Sciatic nerve (tissue), 2 donors: ENCODE measurements at regions of chrX and their contacts with region 1.

Region 1: DNA sequence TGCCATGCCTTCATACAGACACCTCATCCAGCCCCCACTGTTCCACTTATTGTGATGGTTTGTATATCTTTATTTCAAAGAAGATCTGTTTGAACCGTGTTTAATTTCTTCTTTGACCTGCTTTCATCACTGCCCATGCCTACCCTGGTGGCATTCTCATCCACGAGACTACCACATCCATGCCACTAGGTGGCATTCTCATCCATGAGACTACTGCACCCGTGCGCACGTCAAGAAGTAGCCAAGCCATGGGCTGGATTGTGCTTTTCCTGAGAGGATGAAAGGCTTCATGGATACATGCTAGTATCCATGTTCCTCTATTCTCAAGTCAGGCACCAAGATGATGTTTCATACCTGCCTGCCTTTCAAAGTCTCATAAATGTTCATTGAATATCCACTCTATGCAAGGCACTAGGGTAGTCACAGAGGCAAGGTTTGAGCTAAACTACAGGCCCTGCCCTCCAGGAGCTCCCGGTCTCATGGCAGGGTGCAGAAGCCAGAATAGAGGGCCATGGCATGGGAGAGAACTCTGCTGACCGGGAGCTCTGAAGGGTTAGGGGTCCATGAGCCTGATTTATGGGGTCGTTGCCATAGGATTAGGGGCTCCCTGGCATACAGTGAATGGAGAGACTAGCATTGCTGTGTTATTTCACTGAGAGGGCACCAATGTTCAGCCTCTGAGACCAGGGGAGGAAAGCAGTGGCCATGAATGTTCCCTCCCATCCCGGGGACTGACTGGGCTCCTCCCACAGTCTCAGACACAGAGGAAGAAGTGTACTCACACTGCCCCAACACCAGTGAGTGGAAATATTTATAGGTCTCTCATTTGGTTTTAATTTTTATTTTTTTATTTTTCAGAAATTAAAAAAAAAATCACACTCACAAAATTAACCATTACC is 24.8 kb upstream of the EOLA2 start:
- DNase-seq: peak; percentile 64
- ATAC-seq: peak; percentile 86

Region 2: DNA sequence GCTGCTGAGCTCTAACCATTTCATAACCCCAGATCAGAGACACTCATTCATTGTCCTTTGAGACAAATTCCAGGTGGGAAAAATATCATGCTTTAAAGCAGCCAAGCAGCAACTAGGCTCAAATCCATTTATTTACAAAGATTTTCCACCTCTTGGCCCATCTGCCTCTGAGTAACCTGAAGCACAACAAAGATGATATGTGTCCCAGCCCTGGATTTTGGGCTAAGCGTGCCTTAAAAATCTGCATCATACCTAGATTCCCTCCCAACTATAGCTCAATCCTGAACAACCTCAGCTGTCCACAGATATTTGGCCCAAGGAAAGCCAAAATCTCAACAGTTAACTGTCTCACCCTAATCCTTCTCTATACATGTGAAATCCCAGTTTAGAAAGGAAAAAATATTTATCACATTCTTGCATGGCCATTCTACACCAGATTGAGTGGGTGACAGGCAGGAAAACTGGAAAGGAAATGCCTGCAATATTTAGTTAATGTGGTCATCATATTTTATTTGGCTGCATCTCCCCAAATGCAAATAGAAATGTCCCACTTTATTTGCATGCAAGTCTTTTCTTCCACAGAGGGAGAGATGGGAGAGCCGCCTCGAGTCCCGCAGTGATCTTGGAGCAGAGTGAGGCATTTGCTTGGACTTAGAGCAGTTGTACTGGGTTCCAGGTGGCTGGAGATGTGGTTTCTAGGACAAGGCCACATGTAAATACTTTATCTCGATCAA is 121.6 kb after region 1 on chrX:
- intact Hi-C with region 1: no loop called
- DNase-seq: no peak
- ATAC-seq: no peak

Region 3: GRCh38 chrX:150508451-150509367 is 545.6 kb after region 1 on chrX:
- intact Hi-C with region 1: loop called (anchors 10 kb)
- DNase-seq: peak; percentile 73
- ATAC-seq: peak; percentile 80

Region 4: DNA sequence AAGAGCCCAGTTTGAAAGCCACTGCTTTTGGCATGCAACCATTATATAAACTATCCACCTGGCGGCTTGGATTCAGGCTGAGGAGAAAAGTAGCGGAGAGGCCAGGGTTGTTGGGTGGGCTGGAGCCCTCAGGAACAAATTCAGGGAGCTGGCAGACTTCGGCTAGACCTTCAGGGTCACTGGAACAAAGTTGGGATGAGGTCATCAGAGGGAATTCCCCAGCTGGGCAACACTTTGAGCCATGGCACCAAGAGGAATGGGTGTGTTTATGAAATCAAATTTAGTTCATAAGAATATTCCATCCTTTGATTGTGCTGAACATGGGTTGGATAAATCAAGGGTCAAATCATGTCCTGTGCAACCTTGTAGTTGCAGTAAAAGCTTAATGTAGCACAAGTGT is 752.1 kb after region 1 on chrX:
- intact Hi-C with region 1: loop called (anchors 10 kb)
- DNase-seq: no peak
- ATAC-seq: no peak